ENCODE measurements at regions of chr2 and their contacts with region 1.

Region 1: GRCh38 chr2:42663106-42663780 is 94.8 kb downstream of the MTA3 start:
- DNase-seq: peak; percentile 24 to 84 (median 60)
- ATAC-seq: peak; percentile 100
- H3K4me3 ChIP-seq: no peak overlapping the region
- H3K4me3 Mint-ChIP-seq: peak overlapping the region; percentile 32
- H3K27ac ChIP-seq: no peak overlapping the region
- H3K27ac Mint-ChIP-seq: peak overlapping the region; percentile 85
- H3K4me1 ChIP-seq: peaks cover 10% of the 10 kb centered on the region
- H3K4me1 Mint-ChIP-seq: peaks cover 25% of the 10 kb centered on the region
- H3K27me3 ChIP-seq: no peaks in the 10 kb centered on the region
- H3K27me3 Mint-ChIP-seq: no peaks in the 10 kb centered on the region
- CTCF ChIP-seq: peak; percentile 91

Region 2: DNA sequence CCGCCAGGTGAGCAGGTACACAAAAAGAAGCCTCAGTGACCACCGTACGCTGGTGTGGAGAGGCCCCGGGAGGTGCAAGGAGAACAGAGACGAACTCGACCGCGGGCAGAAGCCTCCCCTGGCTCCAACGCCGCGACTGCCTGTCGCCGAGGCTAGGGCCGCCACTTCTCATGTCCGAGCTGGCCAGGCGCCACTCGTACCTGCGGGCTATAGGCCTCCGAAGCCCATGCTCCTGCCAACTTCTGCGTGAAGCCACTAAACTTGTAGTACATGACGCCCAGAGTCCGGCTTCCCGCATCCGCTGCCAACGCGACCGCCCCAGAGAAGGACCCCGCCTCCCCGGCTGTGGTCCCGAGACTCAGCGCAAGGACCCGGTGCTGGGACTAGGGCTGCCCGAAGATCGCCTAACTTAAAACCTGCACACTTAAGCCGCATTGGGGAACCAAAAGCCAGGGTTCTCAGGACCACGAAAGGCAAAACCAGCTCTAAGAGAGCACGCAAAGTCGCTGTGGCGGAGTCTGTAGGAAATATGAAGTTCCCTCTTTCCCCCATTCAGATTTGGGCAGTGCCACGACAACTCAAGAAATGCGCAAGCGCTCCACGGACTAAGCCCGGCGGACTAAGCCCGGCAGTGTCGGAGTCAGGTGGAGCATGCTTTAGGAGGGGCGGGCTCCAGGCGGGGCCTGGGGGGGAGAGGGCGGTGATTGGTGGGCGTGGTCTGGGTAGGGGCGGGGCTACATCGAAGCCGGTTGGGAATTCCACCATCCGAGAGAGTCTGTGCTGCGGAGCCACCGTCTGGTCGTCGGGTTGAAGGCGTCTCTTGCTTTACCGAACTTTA is 302.1 kb before region 1 on chr2 and contains the start of gene COX7A2L:
- CTCF ChIA-PET with region 1: no interaction called
- POLR2A ChIA-PET with region 1: no interaction called
- intact Hi-C with region 1: loop called (anchors 1 to 5 kb)
- DNase-seq: peak; percentile 92 to 98 (median 96)
- ATAC-seq: peak; percentile 94
- H3K4me3 ChIP-seq: peak within 1 kb of the TSS; percentile 89 to 96
- H3K4me3 Mint-ChIP-seq: peak within 1 kb of the TSS; percentile 86
- H3K27ac ChIP-seq: peak within 1 kb of the TSS; percentile 85 to 96
- H3K27ac Mint-ChIP-seq: peak within 1 kb of the TSS; percentile 99
- H3K4me1 ChIP-seq: peaks cover 33% of the 10 kb centered on the region
- H3K4me1 Mint-ChIP-seq: peaks cover 54% of the 10 kb centered on the region
- H3K27me3 ChIP-seq: no peaks in the 10 kb centered on the region
- H3K27me3 Mint-ChIP-seq: no peaks in the 10 kb centered on the region
- CTCF ChIP-seq: no peak
- total RNA-seq, gene COX7A2L: 56.9 to 60.8 TPM

Region 3: GRCh38 chr2:42503291-42503690 is 160.0 kb before region 1 on chr2:
- CTCF ChIA-PET with region 1: interaction called, 83 read pairs
- POLR2A ChIA-PET with region 1: no interaction called
- intact Hi-C with region 1: no loop called
- DNase-seq: no peak
- ATAC-seq: no peak
- H3K4me3 ChIP-seq: no peak overlapping the region
- H3K4me3 Mint-ChIP-seq: no peak overlapping the region
- H3K27ac ChIP-seq: no peak overlapping the region
- H3K27ac Mint-ChIP-seq: no peak overlapping the region
- H3K4me1 ChIP-seq: no peaks in the 10 kb centered on the region
- H3K4me1 Mint-ChIP-seq: no peaks in the 10 kb centered on the region
- H3K27me3 ChIP-seq: no peaks in the 10 kb centered on the region
- H3K27me3 Mint-ChIP-seq: no peaks in the 10 kb centered on the region
- CTCF ChIP-seq: no peak

Region 4: DNA sequence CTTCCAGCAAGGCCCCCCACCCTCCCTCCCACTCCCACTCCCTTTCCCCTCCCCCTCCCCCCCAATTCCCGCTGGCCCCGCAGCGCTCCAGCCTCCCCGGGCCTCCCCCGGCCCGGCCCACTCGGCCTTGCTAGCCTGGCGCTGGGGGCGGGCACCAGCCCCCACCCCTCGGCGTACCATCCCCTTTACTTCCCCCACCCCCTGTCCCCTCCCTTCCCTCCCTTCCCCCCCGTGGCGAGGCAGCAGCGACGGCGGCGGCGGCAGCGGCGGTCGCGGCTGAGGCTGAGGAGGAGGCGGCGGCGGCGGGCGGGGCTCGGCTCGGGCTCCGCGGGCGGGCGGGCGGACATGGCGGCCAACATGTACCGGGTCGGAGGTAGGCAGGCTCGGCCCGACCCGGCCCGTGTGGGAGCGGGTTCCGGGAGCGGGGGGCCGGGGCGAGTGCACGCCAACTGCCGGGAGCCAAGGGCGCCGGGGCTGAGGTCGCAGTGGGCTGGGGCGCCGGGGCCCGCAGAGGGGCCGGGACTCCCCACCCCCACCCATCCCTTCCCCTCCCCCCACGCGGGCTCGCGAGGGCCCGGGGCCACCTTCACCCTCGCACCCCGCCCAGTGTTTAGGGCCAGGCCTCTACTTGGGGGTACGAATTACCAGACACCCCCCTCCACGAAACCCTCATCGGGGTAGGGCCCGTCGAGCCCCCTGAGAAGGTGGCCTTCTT is 94.7 kb before region 1 on chr2 and contains the start of gene MTA3:
- CTCF ChIA-PET with region 1: interaction called, 5 read pairs
- POLR2A ChIA-PET with region 1: no interaction called
- intact Hi-C with region 1: loop called in 1 of 2 experiments (anchors 2 kb)
- DNase-seq: peak; percentile 37 to 82 (median 66)
- ATAC-seq: peak; percentile 69
- H3K4me3 ChIP-seq: peak within 1 kb of the TSS; percentile 63 to 65
- H3K4me3 Mint-ChIP-seq: peak within 1 kb of the TSS; percentile 90
- H3K27ac ChIP-seq: peak within 1 kb of the TSS in 1 of 2 experiments; percentile 3
- H3K27ac Mint-ChIP-seq: peak within 1 kb of the TSS; percentile 92
- H3K4me1 ChIP-seq: peaks cover 37% of the 10 kb centered on the region
- H3K4me1 Mint-ChIP-seq: peaks cover 46% of the 10 kb centered on the region
- H3K27me3 ChIP-seq: no peaks in the 10 kb centered on the region
- H3K27me3 Mint-ChIP-seq: no peaks in the 10 kb centered on the region
- CTCF ChIP-seq: no peak
- total RNA-seq, gene MTA3: 17.6 to 18.4 TPM

Region 5: DNA sequence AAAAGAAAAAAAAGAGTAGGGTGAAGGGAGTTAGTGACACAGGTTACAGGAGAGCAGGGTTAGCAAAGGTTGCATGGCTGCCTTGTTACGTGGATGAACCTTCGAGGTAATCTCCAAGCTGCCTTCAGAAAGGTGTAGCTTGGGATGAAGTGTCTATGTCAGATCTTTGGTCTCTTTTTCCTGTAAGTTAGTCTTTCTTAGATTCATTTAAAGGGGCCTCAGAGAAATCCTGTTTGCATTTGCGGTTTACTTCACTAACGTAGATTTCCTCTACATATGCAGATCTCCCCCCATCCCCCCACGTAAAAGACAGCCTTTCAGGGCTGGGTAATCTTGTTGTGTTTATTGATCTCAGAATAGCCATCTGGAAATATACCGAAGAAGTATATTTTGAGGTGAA is 11.2 kb before region 1 on chr2:
- CTCF ChIA-PET with region 1: interaction called, 16 read pairs
- POLR2A ChIA-PET with region 1: interaction called, 4 read pairs
- intact Hi-C with region 1: loop called in 1 of 2 experiments (anchors 1 kb)
- DNase-seq: peak in 5 of 9 experiments; percentile 34 to 79 (median 53)
- ATAC-seq: peak; percentile 87
- H3K4me3 ChIP-seq: no peak overlapping the region
- H3K4me3 Mint-ChIP-seq: peak overlapping the region; percentile 76
- H3K27ac ChIP-seq: peak overlapping the region; percentile 28 to 49
- H3K27ac Mint-ChIP-seq: peak overlapping the region; percentile 96
- H3K4me1 ChIP-seq: peaks cover 74% of the 10 kb centered on the region
- H3K4me1 Mint-ChIP-seq: peaks cover 64% of the 10 kb centered on the region
- H3K27me3 ChIP-seq: no peaks in the 10 kb centered on the region
- H3K27me3 Mint-ChIP-seq: no peaks in the 10 kb centered on the region
- CTCF ChIP-seq: no peak